Activated CD4-positive, alpha-beta memory T cell treated with anti-CD3 and anti-CD28 coated beads for 36 hours (primary cell): ENCODE measurements at regions of chr19 and their contacts with region 1.

Region 1: GRCh38 chr19:57320180-57321084 is at the start of gene ZNF543:
- DNase-seq: peak; percentile 96
- H3K4me3 Mint-ChIP-seq: peak within 1 kb of the TSS; percentile 85
- H3K27ac Mint-ChIP-seq: peak within 1 kb of the TSS; percentile 83
- H3K4me1 Mint-ChIP-seq: peaks cover 24% of the 10 kb centered on the region
- H3K27me3 Mint-ChIP-seq: peaks cover 18% of the 10 kb centered on the region
- total RNA-seq, gene ZNF543: 4.0 to 4.3 TPM

Region 2: DNA sequence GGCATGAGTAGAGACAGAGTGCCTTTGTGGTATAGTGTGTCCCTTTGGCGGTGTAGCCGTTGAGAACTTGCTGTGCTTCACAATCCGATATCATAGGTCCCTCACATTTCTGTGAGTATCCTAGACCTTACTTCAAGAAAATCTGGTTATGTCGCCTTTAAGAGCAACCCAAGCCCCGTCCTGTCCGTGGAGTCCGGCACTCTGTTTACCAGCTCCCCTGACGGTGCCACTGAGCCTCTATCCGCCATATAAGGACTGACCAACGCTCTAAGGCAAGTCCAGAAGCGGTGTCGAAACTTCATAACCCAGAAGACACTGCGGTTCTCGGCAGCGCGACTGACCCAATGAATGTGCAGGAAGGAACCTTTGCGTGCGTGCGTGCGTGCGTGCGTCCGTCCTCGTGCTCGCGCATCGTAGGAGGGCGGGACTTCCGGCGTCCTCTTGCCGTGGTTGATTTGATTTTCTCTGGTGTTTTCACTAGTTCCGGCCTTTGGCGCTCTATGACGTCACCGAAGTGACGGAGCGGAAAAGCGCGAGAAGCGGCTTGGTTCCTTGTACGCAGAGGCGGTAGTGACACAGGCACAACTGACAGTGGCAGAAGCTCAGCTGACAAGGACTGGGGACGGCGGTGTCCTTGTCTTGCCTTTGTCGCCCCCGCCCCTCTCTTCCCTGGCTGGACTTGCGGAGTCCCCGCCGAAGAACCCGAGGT is 42.7 kb after region 1 on chr19 and contains the starts of genes TRAPPC2B and ZNF547:
- CTCF ChIA-PET with region 1: interaction called, 4 read pairs
- POLR2A ChIA-PET with region 1: no interaction called
- intact Hi-C with region 1: loop called (anchors 1 kb)
- DNase-seq: peak; percentile 99
- H3K4me3 Mint-ChIP-seq: peak within 1 kb of the TSS; percentile 85
- H3K27ac Mint-ChIP-seq: peak within 1 kb of the TSS; percentile 92
- H3K4me1 Mint-ChIP-seq: peaks cover 14% of the 10 kb centered on the region
- H3K27me3 Mint-ChIP-seq: no peaks in the 10 kb centered on the region
- total RNA-seq, gene TRAPPC2B: 3.3 to 3.9 TPM
- total RNA-seq, gene ZNF547: 1.0 to 1.4 TPM